ENCODE measurements at regions of chr17 and their contacts with region 1.

Region 1: DNA sequence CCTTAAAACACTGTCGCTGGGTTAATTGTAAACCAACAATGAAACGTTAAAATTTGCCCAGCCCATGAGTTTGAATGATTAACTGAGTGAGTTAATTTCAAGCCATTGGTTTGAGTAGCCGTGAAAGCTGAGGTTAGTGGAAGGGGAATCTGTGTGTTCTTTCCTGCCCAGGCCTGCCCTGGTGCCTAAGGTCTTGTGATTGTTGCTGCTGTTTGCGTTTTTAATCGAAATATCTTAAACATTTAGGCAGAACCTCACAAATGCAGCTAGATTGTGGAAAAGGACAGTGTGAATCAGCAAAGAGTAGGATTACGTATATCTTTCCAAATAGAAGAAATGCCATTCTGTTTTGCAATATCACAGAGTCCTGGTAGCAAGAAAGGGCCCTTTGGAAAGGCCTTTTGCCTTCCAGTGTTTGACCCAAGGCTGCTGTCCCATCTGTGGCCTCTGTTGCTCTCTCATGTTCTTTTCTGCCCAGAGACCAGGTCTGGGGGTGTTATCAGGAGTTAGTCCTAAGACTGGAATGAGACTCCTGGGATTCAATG is 113.8 kb downstream of the MSI2 start:
- DNase-seq: peak; percentile 82
- H3K4me3 Mint-ChIP-seq: no peak overlapping the region
- H3K27ac Mint-ChIP-seq: peak overlapping the region; percentile 95
- H3K4me1 Mint-ChIP-seq: peaks cover 58% of the 10 kb centered on the region
- H3K27me3 Mint-ChIP-seq: no peaks in the 10 kb centered on the region
- CTCF ChIP-seq: no peak

Region 2: DNA sequence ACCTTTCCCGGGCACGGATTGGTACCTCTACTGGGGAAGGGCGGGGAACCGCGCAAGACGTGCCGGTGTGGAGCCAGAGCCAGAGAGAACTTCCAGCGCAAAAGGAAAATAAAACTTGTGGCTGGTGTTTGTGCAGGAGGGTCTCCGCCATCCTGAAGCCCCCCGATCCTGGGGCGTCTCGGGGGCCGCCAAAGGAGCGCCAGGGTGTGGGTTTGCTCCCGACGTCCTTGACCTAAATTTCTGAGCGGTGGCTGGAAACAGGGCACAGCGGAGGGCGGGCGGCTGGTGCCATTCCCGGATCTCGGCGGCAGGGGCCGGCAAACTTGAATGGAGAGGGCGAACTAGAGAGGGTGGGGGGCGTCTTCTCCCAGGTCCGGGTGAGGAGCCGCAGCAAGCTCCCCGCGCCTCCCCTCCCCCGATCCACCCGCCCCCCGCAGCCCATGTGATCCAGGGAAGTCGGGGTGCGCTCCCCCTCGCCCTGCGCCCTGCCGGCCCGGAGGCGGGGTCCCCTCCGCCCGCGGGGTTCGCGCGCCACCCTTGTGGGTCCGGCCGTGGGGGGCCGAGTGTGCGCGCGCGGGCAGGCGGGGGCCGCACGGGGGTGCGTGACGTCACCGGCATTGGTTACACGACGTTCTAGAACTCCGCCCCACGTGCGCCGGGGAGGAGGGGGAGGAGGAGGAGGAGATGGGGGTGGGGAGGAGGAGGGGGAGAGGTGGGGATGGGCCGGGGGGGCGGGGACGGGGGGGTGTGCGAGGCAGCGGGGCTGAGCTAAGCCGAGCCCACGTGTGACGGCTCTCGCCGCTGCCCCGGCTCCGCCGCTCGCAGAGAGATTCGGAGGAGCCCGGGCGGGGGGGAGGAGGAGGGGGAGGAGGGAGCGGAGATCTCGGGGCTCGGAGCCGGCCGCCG is 114.1 kb before region 1 on chr17 and contains the start of gene MSI2:
- CTCF ChIA-PET with region 1: interaction called, 3 read pairs
- POLR2A ChIA-PET with region 1: interaction called, 9 read pairs
- intact Hi-C with region 1: loop called (anchors 2 kb)
- DNase-seq: peak; percentile 83
- H3K4me3 Mint-ChIP-seq: peak within 1 kb of the TSS; percentile 96
- H3K27ac Mint-ChIP-seq: peak within 1 kb of the TSS; percentile 89
- H3K4me1 Mint-ChIP-seq: peaks cover 18% of the 10 kb centered on the region
- H3K27me3 Mint-ChIP-seq: no peaks in the 10 kb centered on the region
- CTCF ChIP-seq: no peak
- total RNA-seq, gene MSI2: 52.4 and 60.6 TPM in 2 replicates

Region 3: DNA sequence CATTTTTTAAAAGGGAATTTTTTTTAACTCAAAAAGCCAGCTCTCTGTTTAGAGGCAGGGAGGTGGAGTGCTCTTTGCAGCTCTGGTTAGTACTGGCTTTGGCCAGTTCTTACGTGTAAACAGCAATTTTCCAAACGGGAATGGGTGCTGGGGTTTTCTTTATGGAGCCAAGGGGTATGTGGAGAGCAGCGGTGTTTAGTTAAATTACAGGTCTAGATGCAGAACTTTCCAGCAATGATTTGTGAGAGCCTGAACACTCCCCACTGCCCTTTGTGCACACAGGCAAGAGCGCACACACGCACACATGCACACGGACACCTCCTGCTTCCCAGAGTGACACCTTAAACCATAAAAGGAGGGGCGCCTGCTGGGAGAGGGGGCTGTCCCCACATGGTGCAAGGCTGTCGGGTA is 26.4 kb after region 1 on chr17:
- CTCF ChIA-PET with region 1: no interaction called
- POLR2A ChIA-PET with region 1: no interaction called
- intact Hi-C with region 1: no loop called
- DNase-seq: no peak
- H3K4me3 Mint-ChIP-seq: no peak overlapping the region
- H3K27ac Mint-ChIP-seq: no peak overlapping the region
- H3K4me1 Mint-ChIP-seq: no peaks in the 10 kb centered on the region
- H3K27me3 Mint-ChIP-seq: no peaks in the 10 kb centered on the region
- CTCF ChIP-seq: no peak

Region 4: GRCh38 chr17:57541472-57542394 is 171.6 kb after region 1 on chr17:
- CTCF ChIA-PET with region 1: no interaction called
- POLR2A ChIA-PET with region 1: no interaction called
- intact Hi-C with region 1: no loop called
- DNase-seq: peak; percentile 74
- H3K4me3 Mint-ChIP-seq: no peak overlapping the region
- H3K27ac Mint-ChIP-seq: no peak overlapping the region
- H3K4me1 Mint-ChIP-seq: no peaks in the 10 kb centered on the region
- H3K27me3 Mint-ChIP-seq: no peaks in the 10 kb centered on the region
- CTCF ChIP-seq: no peak

Region 5: DNA sequence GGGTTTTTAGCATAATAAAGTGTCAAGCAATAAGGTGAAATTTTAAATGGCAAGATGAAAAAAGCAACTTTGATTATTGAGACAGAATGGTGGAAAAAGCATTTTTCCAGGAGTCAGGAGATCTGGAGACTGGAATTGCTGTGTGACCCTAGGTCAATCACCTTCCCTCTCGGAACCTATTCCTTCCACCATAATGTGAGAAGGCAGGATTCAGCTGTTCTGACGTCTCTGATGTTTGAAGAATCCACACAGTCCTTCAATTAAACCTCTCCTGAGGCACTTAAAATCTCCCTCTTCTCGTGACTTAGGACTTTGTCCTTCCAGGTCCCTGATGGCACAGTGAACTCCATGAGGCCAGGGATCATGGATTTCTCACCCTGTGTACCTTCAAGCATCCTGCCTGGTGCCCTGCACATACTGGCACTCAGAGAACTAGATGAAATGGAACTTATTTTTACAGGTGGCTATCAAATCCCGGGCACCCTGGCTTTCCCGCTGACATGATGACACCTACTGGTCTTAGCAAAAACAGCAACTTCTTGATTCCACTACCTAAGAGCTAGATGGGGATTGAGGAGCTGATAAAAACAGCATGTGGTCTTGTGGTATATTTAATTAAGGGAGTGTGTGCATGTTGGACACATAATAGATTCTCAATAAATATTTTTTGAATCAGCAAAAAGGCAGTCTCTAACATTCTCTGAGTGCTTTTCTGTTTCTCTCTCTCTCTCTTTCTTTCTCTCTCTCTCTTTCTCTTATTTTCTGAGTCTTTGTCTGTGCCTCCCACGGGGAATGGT is 377.3 kb after region 1 on chr17:
- CTCF ChIA-PET with region 1: no interaction called
- POLR2A ChIA-PET with region 1: no interaction called
- intact Hi-C with region 1: loop called (anchors 10 kb)
- DNase-seq: peak; percentile 68
- H3K4me3 Mint-ChIP-seq: no peak overlapping the region
- H3K27ac Mint-ChIP-seq: no peak overlapping the region
- H3K4me1 Mint-ChIP-seq: no peaks in the 10 kb centered on the region
- H3K27me3 Mint-ChIP-seq: peaks cover 55% of the 10 kb centered on the region
- CTCF ChIP-seq: peak; percentile 77

Measured in MCF 10A (cell line).